Right ventricle myocardium inferior (tissue), 1 donor: ENCODE measurements at regions of chr6 and their contacts with region 1.

Region 1: DNA sequence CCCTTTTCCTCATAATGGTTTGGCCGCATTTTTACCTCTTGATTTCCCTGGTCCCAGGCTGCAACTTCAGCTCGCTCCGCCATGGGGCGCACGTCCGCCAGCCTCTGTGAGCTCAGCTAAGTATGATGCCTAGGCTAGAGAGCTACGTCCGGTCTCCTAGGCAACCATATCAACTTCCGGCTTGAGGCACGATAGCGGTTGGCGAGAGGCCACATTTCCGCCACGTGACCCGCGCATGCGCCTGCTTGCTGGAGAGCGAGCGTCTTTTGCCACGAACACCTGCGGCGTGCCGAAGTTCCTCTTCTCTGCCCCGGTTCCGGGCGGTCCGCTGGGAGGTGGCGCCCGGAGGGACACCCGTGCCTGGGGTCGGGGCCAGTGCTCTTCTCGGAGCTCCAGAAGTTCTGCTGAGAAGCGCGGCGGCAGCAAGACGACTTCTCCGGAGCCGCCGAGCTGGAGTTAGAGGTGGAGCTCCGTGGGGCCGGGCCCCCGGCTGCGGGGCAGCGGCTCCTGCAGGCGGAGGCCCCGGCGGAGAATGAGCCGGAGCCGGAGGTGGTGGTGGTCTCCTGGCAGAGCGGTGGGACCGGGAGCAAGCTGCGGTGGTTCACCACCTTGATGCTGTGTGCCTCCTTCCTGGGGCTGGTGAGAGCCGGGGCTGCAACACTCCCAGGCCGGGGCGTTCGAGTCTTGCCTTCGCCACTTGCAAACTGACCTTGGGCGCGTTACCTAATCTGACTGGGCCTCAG is 172.0 kb downstream of the SLC16A10 start:
- DNase-seq: peak; percentile 99
- ATAC-seq: peak; percentile 99

Region 2: DNA sequence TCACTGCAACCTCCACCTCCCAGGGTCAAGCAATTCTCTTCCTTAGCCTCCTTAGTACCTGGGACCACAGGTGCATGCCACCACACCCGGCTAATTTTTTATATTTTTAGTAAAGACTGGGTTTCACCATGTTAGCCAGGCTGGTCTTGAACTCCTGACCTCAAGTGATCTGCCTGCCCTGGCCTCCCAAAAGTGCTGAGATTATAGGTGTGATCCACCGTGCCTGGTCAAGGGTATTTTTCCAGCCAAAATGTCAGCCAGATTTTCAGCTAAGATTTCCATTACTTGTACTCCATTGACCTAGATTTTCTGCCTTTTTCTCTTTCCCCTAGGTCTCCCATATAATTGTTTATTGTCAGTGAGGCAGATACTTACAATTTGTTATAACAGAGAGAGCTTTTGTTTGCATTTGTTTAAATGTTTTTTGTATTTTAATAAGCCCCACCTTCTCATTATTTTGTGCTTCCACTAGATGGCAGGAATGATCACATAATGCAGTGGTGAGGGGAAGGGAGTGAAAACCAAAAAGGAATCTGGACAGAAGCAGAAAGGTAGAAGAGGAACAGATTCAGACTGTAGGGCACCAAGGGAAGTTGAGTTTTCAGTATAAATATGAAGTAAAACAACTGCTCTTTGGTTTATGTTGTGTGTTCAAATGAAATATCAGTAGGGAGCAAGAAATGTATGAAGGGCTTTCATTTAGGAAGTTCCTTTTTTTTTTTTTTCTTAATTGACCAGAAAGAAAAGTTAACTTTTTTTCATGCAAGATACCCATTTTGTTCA is 247.7 kb before region 1 on chr6:
- intact Hi-C with region 1: loop called (anchors 5 kb)
- DNase-seq: no peak
- ATAC-seq: peak; percentile 74

Region 3: GRCh38 chr6:111642463-111643158 is 383.4 kb after region 1 on chr6:
- intact Hi-C with region 1: loop called (anchors 2 kb)
- DNase-seq: no peak
- ATAC-seq: peak; percentile 87

Region 4: GRCh38 chr6:112043032-112044007 is 784.1 kb after region 1 on chr6:
- intact Hi-C with region 1: loop called (anchors 5 kb)
- DNase-seq: peak; percentile 92
- ATAC-seq: peak; percentile 95

Region 5: GRCh38 chr6:112223070-112223861 is 964.0 kb after region 1 on chr6:
- intact Hi-C with region 1: no loop called
- DNase-seq: no peak
- ATAC-seq: peak; percentile 72